ENCODE measurements at regions of chr10 and their contacts with region 1.

Region 1: GRCh38 chr10:80382989-80383388 is 25.4 kb upstream of the PRXL2A start:
- DNase-seq: peak; percentile 58
- CTCF ChIP-seq: peak; percentile 60

Region 2: GRCh38 chr10:80421707-80422536 is 38.9 kb after region 1 on chr10:
- CTCF ChIA-PET with region 1: interaction called, 13 read pairs
- POLR2A ChIA-PET with region 1: no interaction called
- DNase-seq: peak; percentile 55
- CTCF ChIP-seq: no peak

Region 3: GRCh38 chr10:80453701-80454513 is 70.9 kb after region 1 on chr10 and contains the start of gene TSPAN14:
- CTCF ChIA-PET with region 1: interaction called, 10 read pairs
- POLR2A ChIA-PET with region 1: no interaction called
- DNase-seq: peak; percentile 89
- CTCF ChIP-seq: no peak

Region 4: GRCh38 chr10:80509403-80510161 is 126.6 kb after region 1 on chr10:
- CTCF ChIA-PET with region 1: interaction called, 57 read pairs
- POLR2A ChIA-PET with region 1: no interaction called
- DNase-seq: no peak
- CTCF ChIP-seq: no peak

Region 5: DNA sequence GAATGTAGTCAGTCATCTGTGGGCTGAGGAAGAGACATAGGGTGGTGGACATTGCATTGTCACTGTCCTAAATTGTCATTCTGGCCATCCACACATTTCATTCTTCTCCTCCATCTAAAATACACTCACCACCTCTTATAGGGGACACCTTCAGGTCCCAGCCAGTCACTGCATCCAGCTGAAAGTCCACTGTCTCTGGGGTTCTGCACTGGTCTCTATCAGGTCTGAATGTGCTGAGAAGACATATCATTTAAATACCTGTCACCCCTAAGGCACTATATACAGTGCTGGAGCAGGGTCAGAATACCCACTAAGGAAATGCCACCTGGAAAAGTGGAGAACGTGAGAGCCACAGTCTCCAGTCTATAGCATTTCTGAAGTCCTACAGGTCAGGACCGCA is 184.3 kb after region 1 on chr10:
- CTCF ChIA-PET with region 1: no interaction called
- POLR2A ChIA-PET with region 1: no interaction called
- DNase-seq: no peak
- CTCF ChIP-seq: no peak

Measured in GM10248 (cell line).